ENCODE measurements at regions of chr3 and their contacts with region 1.

Region 1: GRCh38 chr3:129224984-129225393 is 24.4 kb upstream of the COPG1 start:
- DNase-seq: peak; percentile 67
- ATAC-seq: peak; percentile 83
- H3K4me3 ChIP-seq: peak overlapping the region; percentile 11 to 45; a peak in 3 of 4 replicates
- H3K27ac ChIP-seq: peak overlapping the region; percentile 93
- H3K4me1 ChIP-seq: peaks cover 51% of the 10 kb centered on the region
- H3K27me3 ChIP-seq: no peaks in the 10 kb centered on the region
- CTCF ChIP-seq: no peak

Region 2: DNA sequence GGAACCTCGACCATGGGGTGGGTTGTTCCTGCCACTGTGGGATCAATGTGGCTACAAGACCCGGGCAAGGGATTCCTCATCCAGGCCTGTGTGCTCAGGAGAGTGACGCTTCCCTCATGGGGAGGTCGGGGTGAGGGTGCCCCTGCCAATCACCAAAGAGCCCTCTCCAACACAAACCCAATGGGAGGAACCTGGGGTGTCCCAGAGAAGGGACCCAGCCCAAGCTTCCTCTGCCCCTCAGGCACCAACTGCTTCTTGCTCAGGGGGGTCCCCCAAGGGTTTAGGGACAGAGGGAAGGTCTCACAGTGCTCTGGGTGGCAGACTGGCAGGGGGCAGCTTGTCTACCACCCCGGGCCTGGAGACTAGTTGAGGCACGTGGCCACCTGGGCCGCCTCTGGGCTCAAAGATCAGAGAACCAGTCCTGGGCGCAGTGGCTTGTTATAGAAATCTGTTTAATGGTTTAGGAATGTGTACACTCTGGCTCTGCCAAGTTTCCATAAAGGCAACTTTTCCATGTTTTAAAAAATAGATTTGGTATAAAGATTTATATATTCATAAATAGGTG is 137.8 kb before region 1 on chr3:
- CTCF ChIA-PET with region 1: no interaction called
- POLR2A ChIA-PET with region 1: interaction called, 17 read pairs
- in situ Hi-C with region 1: no loop called
- intact Hi-C with region 1: no loop called
- DNase-seq: no peak
- ATAC-seq: no peak
- H3K4me3 ChIP-seq: no peak overlapping the region
- H3K27ac ChIP-seq: 0 out of 2 replicates have a peak overlapping the region, but pooled peaks have one; percentile 12
- H3K4me1 ChIP-seq: peaks cover 4% of the 10 kb centered on the region
- H3K27me3 ChIP-seq: no peaks in the 10 kb centered on the region
- CTCF ChIP-seq: no peak

Region 3: GRCh38 chr3:129183569-129184395 is 41.2 kb before region 1 on chr3 and contains the start of gene CNBP:
- CTCF ChIA-PET with region 1: interaction called, 3 read pairs
- POLR2A ChIA-PET with region 1: interaction called, 3 read pairs
- in situ Hi-C with region 1: no loop called
- intact Hi-C with region 1: loop called (anchors 5 kb)
- DNase-seq: no peak
- ATAC-seq: peak; percentile 98
- H3K4me3 ChIP-seq: peak within 1 kb of the TSS; percentile 76
- H3K27ac ChIP-seq: peak within 1 kb of the TSS; percentile 98
- H3K4me1 ChIP-seq: peaks cover 25% of the 10 kb centered on the region
- H3K27me3 ChIP-seq: no peaks in the 10 kb centered on the region
- CTCF ChIP-seq: no peak
- total RNA-seq, gene CNBP: 355 TPM

Region 4: GRCh38 chr3:129235344-129235917 is 10.4 kb after region 1 on chr3:
- CTCF ChIA-PET with region 1: interaction called, 3 read pairs
- POLR2A ChIA-PET with region 1: interaction called, 16 read pairs
- in situ Hi-C with region 1: no loop called
- intact Hi-C with region 1: no loop called
- DNase-seq: no peak
- ATAC-seq: no peak
- H3K4me3 ChIP-seq: no peak overlapping the region
- H3K27ac ChIP-seq: peak overlapping the region; percentile 32; the same call in 1 of the 2 replicates
- H3K4me1 ChIP-seq: peaks cover 20% of the 10 kb centered on the region
- H3K27me3 ChIP-seq: no peaks in the 10 kb centered on the region
- CTCF ChIP-seq: no peak

Measured in Panc1 (cell line).